Posterior cingulate gyrus (tissue), 11 donors: ENCODE measurements at regions of chr2 and their contacts with region 1.

Region 1: GRCh38 chr2:24046930-24047702 is at the start of gene WDCP:
- DNase-seq: peak; percentile 94 to 99 (median 98)

Region 2: DNA sequence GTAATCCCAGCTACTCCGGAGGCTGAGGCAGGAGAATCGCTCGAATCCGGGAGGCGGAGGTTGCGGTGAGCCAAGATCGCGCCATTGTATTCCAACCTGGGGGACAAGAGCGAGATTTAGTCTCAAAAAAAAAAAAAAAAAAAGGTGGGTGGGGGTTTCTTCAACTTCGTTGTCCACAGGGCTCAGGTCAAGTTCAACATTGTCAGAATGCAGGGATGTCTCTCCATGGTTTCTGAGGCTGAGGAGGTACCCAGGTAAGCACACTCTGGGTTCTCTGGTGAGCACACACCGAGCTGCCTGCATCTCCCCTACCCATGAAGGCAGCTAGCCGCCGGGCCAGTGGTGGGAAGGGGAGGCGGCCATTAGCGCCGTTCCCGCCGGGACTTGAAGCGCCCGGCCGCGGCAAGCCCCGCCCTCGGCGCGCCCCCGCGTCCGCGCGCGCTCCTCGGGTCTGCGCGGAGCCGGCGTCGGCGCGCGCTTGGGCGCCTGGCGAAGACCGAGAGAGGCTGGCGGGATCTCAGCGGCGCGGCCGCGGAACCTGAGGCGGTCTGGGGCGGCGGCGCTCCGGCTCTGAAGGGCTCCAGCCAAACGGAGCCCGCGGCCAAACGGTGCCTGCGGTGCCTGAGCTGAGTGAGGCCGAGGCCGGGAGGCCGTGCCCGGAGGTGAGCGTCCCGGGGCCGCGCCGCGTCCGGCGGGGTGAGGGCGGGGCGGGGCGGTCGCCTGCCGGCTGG is 107.0 kb before region 1 on chr2 and contains the start of gene UBXN2A:
- intact Hi-C with region 1: loop called (anchors 1 kb)
- DNase-seq: peak; percentile 51 to 96 (median 69)

Region 3: DNA sequence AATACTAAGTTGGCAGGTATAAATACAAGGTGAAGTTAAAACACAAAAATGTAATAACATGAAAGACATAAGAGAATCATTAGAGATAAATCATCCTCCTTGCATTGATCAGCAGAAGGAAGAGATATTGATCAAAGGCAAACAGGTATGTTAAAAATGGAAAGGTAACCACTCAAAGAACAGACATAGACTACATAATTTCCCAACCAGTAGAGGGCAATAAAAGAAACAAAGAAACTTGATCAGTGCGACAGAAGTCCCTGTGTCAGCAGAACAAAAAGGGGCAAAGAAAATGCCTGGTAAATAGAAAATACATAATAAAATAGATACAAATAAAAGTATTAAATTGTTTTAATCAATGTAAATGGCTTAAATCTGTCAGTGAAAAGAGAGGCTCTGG is 181.4 kb after region 1 on chr2:
- intact Hi-C with region 1: no loop called
- DNase-seq: no peak

Region 4: GRCh38 chr2:24239553-24239952 is 192.4 kb after region 1 on chr2:
- intact Hi-C with region 1: no loop called
- DNase-seq: no peak

Region 5: GRCh38 chr2:24739354-24740025 is 692.4 kb after region 1 on chr2:
- intact Hi-C with region 1: no loop called
- DNase-seq: no peak